ENCODE measurements at regions of chr10 and their contacts with region 1.

Region 1: DNA sequence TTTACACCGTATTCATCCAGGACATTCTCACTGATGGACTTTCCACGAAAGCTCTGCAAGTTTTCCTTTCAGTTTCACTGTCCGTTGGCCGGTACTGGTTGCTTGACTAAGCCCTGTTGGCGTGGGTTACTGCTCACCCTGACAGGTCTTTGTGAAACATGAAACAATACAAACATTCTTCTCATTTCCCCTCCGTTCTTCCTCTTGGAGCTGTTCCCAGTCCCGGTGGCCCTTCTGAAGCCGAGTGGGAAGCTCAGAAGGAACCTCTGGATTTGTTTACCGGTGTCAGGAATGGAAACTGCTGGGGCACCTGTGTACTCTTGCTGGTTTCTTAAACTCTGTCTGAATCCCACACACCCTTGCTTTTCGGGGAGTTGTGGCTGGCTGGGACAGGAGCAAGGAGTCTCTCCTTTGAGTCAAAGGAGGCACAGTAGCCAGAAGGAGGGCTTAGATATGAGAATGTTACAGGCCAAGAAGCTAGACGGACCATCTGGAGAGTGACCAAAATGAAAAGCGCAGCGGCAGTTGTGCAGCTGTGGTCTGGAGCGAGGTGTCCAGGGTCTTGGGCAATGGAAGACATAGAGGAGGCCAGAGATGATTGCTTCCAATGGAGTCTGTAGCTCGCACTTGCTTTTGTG is 45.7 kb downstream of the LYZL2 start:
- DNase-seq: peak in 4 of 5 donors; percentile 66 to 83 (median 77)
- ATAC-seq: peak; percentile 85 to 97 (median 90)
- H3K4me3 ChIP-seq: peak overlapping the region in 10 of 12 donors; percentile 24 to 52 (median 42)
- H3K27ac ChIP-seq: peak overlapping the region; percentile 34 to 91 (median 82)
- H3K4me1 ChIP-seq: peaks cover 0 to 50% (median 11%) of the 10 kb centered on the region in 12 donors
- H3K27me3 ChIP-seq: no peaks in the 10 kb centered on the region
- CTCF ChIP-seq: peak in 1 of 12 donors; percentile 6
- POLR2A ChIP-seq: no peak

Region 2: DNA sequence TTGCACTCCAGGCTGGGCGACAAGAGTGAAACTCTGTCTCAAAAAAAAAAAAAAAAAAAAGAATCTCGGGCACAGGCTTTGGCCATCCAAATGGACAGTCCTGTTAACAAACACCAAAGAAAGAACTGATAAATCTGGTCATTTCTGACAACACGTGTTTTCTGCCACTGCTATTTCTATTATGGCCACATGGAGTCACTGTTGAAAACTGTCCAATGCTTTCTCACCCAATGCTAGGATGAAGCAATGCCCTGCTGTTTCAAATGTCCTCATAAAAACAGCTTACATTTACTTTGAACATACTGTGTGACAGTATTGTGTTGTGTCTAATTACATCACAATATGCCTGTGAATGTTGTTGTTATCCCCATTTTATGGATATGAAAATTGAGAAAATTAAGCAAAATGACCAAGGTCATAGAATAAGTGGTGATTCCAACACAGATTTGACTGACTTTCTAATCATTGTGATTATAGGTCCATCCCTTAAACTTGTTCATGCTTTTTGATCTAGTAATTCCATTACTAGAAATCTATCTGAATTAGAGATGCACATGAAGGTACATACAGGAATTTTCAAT is 169.8 kb before region 1 on chr10:
- intact Hi-C with region 1: loop called in 4 of 10 experiments (anchors 5 kb)
- DNase-seq: no peak
- ATAC-seq: peak; percentile 53 to 83 (median 74)
- H3K4me3 ChIP-seq: no peak overlapping the region
- H3K27ac ChIP-seq: no peak overlapping the region
- H3K4me1 ChIP-seq: peaks cover 0 to 24% (median 0%) of the 10 kb centered on the region in 12 donors
- H3K27me3 ChIP-seq: no peaks in the 10 kb centered on the region
- CTCF ChIP-seq: peak; percentile 72 to 86 (median 76)
- POLR2A ChIP-seq: no peak

Region 3: DNA sequence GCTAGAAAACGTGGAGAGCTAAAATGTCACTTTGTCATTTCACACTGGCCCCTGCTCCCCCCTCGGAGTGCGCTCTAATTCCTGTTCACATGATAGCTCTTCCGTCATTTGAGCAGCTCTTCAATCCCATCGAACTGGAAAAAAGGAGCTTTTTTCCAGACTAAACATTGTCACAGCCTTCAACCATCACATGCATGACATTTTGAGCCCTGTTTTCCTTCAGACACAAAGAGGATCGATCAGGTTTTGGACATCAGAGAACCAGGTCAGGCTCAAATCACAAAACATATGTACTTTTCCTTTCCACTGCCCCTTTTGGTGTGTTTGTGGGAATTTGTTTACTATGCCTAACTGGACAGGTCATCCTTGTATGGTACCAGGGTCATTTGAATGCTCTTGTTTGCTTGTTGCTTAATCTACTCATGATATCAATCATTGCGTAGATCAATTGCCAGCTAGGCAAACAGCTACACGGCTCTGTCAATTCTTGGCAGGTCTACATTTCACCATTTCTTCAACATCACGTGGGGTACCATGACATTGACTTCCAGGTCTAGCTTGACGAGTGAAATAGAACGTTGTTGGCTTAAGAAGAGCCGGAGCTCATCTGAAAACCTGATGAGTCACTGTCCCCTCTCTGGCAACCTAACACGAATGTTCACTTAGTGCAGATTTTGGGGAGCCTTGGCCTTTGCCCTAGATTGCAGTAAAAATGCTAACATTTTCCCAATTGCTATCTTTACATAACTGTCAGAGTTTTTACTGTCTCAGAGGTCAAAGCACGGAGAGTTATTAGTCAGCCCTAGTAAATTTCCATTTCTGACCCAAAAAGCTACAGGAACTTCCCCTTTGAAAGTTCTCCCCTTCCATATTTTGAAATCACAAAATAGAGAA is 41.6 kb before region 1 on chr10:
- intact Hi-C with region 1: loop called in 9 of 10 experiments (anchors 2 to 10 kb)
- DNase-seq: no peak
- ATAC-seq: peak in 1 of 4 donors; percentile 43
- H3K4me3 ChIP-seq: no peak overlapping the region
- H3K27ac ChIP-seq: peak overlapping the region in 2 of 12 donors; percentile 30 to 87
- H3K4me1 ChIP-seq: peaks cover 0 to 59% (median 11%) of the 10 kb centered on the region in 12 donors
- H3K27me3 ChIP-seq: no peaks in the 10 kb centered on the region
- CTCF ChIP-seq: no peak
- POLR2A ChIP-seq: no peak

Region 4: DNA sequence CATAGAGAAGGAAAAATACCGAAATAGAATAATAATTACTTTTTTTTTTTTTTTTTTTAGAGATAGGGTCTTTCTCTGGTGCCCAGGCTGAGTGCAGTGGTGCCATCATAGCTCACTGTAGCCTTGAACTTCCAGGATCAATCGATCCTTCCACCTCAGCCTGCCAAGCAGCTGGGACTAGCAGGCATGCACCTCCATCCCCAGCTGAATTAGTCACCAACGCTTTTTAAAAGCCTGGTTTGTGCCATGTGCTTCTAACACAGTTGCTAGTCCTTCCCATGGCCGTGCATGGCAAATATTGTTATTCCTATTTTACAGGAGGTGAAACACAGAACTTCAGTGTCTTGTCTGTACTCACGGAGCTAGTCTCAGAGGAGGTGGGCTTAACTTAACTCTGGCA is 22.4 kb after region 1 on chr10:
- intact Hi-C with region 1: loop called in 1 of 10 experiments (anchors 2 kb)
- DNase-seq: no peak
- ATAC-seq: no peak
- H3K4me3 ChIP-seq: no peak overlapping the region
- H3K27ac ChIP-seq: no peak overlapping the region
- H3K4me1 ChIP-seq: peaks cover 0 to 12% (median 0%) of the 10 kb centered on the region in 12 donors
- H3K27me3 ChIP-seq: no peaks in the 10 kb centered on the region
- CTCF ChIP-seq: no peak
- POLR2A ChIP-seq: no peak

Measured in heart left ventricle (tissue), 16 donors.